Activated CD4-positive, alpha-beta memory T cell treated with anti-CD3 and anti-CD28 coated beads, Interleukin-2, amount 10 ng/mL, durations not matched to agents 7 days and 5 days (primary cell): ENCODE measurements at regions of chr17 and their contacts with region 1.

Region 1: GRCh38 chr17:74203439-74204240 is at the start of gene RPL38:
- DNase-seq: peak; percentile 96
- H3K4me3 Mint-ChIP-seq: peak within 1 kb of the TSS; percentile 98
- H3K27ac Mint-ChIP-seq: peak within 1 kb of the TSS; percentile 91
- H3K4me1 Mint-ChIP-seq: peaks cover 45% of the 10 kb centered on the region
- H3K27me3 Mint-ChIP-seq: peaks cover 24% of the 10 kb centered on the region
- total RNA-seq, gene RPL38: 1,064 to 1,066 TPM

Region 2: GRCh38 chr17:74190172-74190571 is 13.5 kb before region 1 on chr17:
- CTCF ChIA-PET with region 1: interaction called, 31 read pairs
- POLR2A ChIA-PET with region 1: interaction called, 7 read pairs
- DNase-seq: no peak
- H3K4me3 Mint-ChIP-seq: no peak overlapping the region
- H3K27ac Mint-ChIP-seq: no peak overlapping the region
- H3K4me1 Mint-ChIP-seq: peaks cover 1% of the 10 kb centered on the region
- H3K27me3 Mint-ChIP-seq: peaks cover 23% of the 10 kb centered on the region